ENCODE measurements at regions of chr1 and their contacts with region 1.

Region 1: DNA sequence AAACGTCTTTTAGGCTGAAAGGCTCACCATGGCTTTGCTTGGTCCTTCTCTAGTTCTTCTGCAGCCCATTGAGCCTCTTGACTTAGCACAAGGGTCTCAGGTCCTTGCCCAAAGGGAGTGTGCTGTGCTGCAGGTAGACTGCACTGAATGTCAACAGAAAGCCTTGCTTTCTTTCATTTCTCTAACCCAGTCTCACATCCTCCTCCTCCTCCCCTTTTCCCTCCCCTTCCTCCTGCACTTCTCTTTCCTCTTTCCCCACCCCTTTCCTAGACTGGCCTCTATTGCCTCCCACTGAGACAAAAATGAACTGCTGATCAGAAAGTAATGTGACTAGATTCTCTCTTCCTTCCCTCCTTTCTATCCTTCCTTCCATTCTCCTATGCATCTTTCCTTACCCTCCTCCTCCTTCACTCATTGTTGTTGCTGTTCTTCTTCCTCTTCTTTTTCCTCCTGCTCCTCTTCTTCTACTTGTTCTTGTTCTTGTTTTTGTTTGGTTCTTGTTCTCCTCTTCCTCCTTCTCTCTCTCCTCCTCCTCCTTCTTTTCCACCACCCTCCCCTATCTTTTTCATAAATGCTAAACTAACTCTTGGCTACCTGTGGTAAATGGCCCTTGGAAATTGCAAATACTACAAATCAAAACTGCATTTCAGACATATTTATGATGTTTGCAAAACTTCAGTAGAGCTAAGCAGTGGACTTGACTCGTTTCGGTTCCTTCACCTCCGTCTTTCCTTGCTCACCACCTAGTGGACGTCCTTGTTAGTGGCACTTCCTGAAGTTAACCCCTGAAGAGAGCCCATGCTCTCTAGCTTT is at the start of gene SELL:
- DNase-seq: peak; percentile 85
- ATAC-seq: peak; percentile 78
- H3K4me3 ChIP-seq: peak within 1 kb of the TSS; percentile 50 to 99 (median 82)
- H3K4me3 Mint-ChIP-seq: peak within 1 kb of the TSS; percentile 90
- H3K27ac ChIP-seq: peak within 1 kb of the TSS; percentile 45 to 87
- H3K27ac Mint-ChIP-seq: peak within 1 kb of the TSS; percentile 79
- H3K4me1 ChIP-seq: peaks cover 15 to 21% of the 10 kb centered on the region in 2 donors
- H3K4me1 Mint-ChIP-seq: peaks cover 32% of the 10 kb centered on the region
- H3K27me3 ChIP-seq: no peaks in the 10 kb centered on the region
- H3K27me3 Mint-ChIP-seq: peaks cover 3% of the 10 kb centered on the region
- CTCF ChIP-seq: peak; percentile 91
- total RNA-seq, gene SELL: 250 and 262 TPM in 2 replicates

Region 2: DNA sequence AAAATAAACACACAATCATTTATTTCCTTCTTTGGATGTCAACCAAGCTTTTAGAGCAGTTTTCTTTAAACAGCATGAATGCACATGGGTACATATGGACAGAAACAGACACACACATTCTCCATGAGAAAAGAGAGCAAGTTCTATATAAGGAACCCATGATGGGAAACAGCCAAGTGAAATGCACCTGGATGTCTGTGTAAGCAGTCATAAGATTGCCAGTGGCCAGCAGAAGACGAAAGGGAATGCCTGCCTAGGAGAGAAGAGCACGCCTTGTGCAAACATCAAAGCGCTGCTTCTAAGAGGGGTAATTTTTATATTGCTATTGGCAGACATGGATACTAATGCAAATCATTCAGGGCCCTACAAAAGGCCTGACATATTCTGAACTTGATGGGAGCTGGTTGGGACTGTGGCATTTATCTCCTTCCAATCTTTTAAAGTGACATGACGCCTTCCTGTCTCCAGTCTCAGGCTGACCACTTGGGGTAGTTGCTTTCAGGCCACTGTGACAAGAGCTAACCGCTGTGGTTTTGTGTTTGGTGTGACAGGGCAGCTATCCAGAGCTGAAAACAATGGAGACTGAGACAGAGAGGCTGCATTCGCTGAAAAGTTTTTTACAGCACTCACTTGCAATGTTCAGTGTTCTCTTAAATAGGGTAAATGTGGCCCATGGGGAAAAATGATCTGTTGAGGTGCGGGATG is 907.7 kb before region 1 on chr1:
- CTCF ChIA-PET with region 1: no interaction called
- POLR2A ChIA-PET with region 1: no interaction called
- intact Hi-C with region 1: no loop called
- DNase-seq: no peak
- ATAC-seq: no peak
- H3K4me3 ChIP-seq: no peak overlapping the region
- H3K4me3 Mint-ChIP-seq: no peak overlapping the region
- H3K27ac ChIP-seq: no peak overlapping the region
- H3K27ac Mint-ChIP-seq: no peak overlapping the region
- H3K4me1 ChIP-seq: no peaks in the 10 kb centered on the region
- H3K4me1 Mint-ChIP-seq: no peaks in the 10 kb centered on the region
- H3K27me3 ChIP-seq: peaks cover 0 to 3% (median 0%) of the 10 kb centered on the region in 4 experiments
- H3K27me3 Mint-ChIP-seq: peaks cover 13% of the 10 kb centered on the region
- CTCF ChIP-seq: no peak

Region 3: DNA sequence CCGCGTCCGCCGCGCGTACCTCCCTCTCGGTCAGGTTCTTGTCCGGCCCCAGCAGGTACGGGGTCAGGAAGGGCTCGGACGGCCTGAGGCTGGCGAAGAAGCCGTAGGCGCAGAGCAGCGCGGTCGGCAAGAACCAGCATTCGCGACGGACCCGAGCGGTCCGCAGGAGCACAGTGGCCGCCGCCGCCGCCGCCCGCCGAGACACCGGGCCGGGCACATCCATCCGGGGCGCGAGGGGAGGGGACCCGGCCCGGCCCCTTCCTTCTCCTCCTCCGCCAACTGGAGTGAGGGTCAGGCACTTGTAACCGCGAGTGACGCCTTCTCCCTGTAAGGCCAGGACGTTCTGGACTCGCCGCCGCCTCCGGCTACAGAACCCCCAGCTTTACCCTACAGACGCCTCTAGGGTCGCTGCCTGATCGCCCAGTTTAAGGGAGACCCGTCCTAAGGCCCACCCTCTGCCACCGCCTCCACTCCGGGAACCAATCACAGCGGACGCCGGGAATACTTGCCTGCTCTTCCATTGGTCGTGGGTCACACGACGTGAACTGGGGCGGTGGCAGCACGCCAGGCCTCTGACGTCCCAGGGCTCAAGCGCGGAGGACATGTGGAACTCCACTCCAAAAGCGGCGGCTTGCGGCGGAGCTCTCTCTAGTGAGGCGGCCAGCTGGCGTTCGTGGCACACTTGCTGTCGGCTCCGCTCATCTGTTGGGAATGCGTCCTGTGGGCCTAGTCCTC is 226.0 kb before region 1 on chr1 and contains the start of gene SLC19A2:
- CTCF ChIA-PET with region 1: interaction called, 4 read pairs
- POLR2A ChIA-PET with region 1: no interaction called
- intact Hi-C with region 1: loop called (anchors 2 kb)
- DNase-seq: peak; percentile 96
- ATAC-seq: peak; percentile 98
- H3K4me3 ChIP-seq: peak within 1 kb of the TSS; percentile 68 to 82 (median 74)
- H3K4me3 Mint-ChIP-seq: peak within 1 kb of the TSS; percentile 94
- H3K27ac ChIP-seq: peak within 1 kb of the TSS; percentile 62 to 82
- H3K27ac Mint-ChIP-seq: peak within 1 kb of the TSS; percentile 93
- H3K4me1 ChIP-seq: peaks cover 16 to 18% of the 10 kb centered on the region in 2 donors
- H3K4me1 Mint-ChIP-seq: peaks cover 28% of the 10 kb centered on the region
- H3K27me3 ChIP-seq: peaks cover 0 to 3% (median 0%) of the 10 kb centered on the region in 4 experiments
- H3K27me3 Mint-ChIP-seq: peaks cover 4% of the 10 kb centered on the region
- CTCF ChIP-seq: peak; percentile 44
- total RNA-seq, gene SLC19A2: 3.9 TPM in 2 replicates

Region 4: GRCh38 chr1:169595764-169596711 is 115.6 kb before region 1 on chr1:
- CTCF ChIA-PET with region 1: interaction called, 340 read pairs
- POLR2A ChIA-PET with region 1: interaction called, 6 read pairs
- intact Hi-C with region 1: loop called (anchors 1 kb)
- DNase-seq: no peak
- ATAC-seq: no peak
- H3K4me3 ChIP-seq: no peak overlapping the region
- H3K4me3 Mint-ChIP-seq: no peak overlapping the region
- H3K27ac ChIP-seq: no peak overlapping the region
- H3K27ac Mint-ChIP-seq: no peak overlapping the region
- H3K4me1 ChIP-seq: peaks cover under 1% of the 10 kb centered on the region in 2 donors
- H3K4me1 Mint-ChIP-seq: peaks cover 6% of the 10 kb centered on the region
- H3K27me3 ChIP-seq: no peaks in the 10 kb centered on the region
- H3K27me3 Mint-ChIP-seq: no peaks in the 10 kb centered on the region
- CTCF ChIP-seq: no peak

Region 5: DNA sequence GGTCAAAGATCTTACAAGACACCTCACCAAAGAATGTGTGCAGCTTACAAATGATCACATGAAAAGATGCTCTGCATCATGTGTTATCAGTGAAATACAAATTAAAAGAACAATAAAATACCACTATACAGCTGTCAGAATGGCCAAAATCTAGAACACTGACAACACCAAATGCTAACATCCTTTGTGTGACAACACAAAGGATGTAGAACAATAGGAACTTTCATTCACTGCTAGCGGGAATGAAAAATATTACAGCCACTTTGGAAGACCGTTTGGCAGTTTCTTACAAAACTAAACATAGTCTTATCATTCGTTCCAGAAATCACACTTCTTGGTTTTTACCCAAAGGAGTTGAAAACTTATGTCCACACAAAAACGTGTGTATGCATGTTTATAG is 61.1 kb before region 1 on chr1:
- CTCF ChIA-PET with region 1: interaction called, 11 read pairs
- POLR2A ChIA-PET with region 1: no interaction called
- intact Hi-C with region 1: no loop called
- DNase-seq: no peak
- ATAC-seq: no peak
- H3K4me3 ChIP-seq: no peak overlapping the region
- H3K4me3 Mint-ChIP-seq: no peak overlapping the region
- H3K27ac ChIP-seq: no peak overlapping the region
- H3K27ac Mint-ChIP-seq: no peak overlapping the region
- H3K4me1 ChIP-seq: peaks cover 4 to 7% of the 10 kb centered on the region in 2 donors
- H3K4me1 Mint-ChIP-seq: peaks cover 25% of the 10 kb centered on the region
- H3K27me3 ChIP-seq: no peaks in the 10 kb centered on the region
- H3K27me3 Mint-ChIP-seq: no peaks in the 10 kb centered on the region
- CTCF ChIP-seq: no peak

Region 6: GRCh38 chr1:169701261-169702005 is 10.2 kb before region 1 on chr1:
- CTCF ChIA-PET with region 1: interaction called, 109 read pairs
- POLR2A ChIA-PET with region 1: interaction called, 5 read pairs
- intact Hi-C with region 1: loop called (anchors 1 kb)
- DNase-seq: peak; percentile 45
- ATAC-seq: peak; percentile 44
- H3K4me3 ChIP-seq: peak overlapping the region; percentile 0 to 16 (median 1)
- H3K4me3 Mint-ChIP-seq: peak overlapping the region; percentile 76
- H3K27ac ChIP-seq: peak overlapping the region; percentile 56 to 87
- H3K27ac Mint-ChIP-seq: peak overlapping the region; percentile 94
- H3K4me1 ChIP-seq: peaks cover 98 to 100% of the 10 kb centered on the region in 2 donors
- H3K4me1 Mint-ChIP-seq: peaks cover 95% of the 10 kb centered on the region
- H3K27me3 ChIP-seq: no peaks in the 10 kb centered on the region
- H3K27me3 Mint-ChIP-seq: no peaks in the 10 kb centered on the region
- CTCF ChIP-seq: no peak

Region 7: GRCh38 chr1:169762699-169763098 is 51.0 kb after region 1 on chr1:
- CTCF ChIA-PET with region 1: no interaction called
- POLR2A ChIA-PET with region 1: no interaction called
- intact Hi-C with region 1: no loop called
- DNase-seq: no peak
- ATAC-seq: no peak
- H3K4me3 ChIP-seq: no peak overlapping the region
- H3K4me3 Mint-ChIP-seq: no peak overlapping the region
- H3K27ac ChIP-seq: no peak overlapping the region
- H3K27ac Mint-ChIP-seq: no peak overlapping the region
- H3K4me1 ChIP-seq: no peaks in the 10 kb centered on the region
- H3K4me1 Mint-ChIP-seq: no peaks in the 10 kb centered on the region
- H3K27me3 ChIP-seq: peaks cover 0 to 7% (median 0%) of the 10 kb centered on the region in 4 experiments
- H3K27me3 Mint-ChIP-seq: peaks cover 20% of the 10 kb centered on the region
- CTCF ChIP-seq: no peak

Region 8: GRCh38 chr1:169893494-169894362 is 182.1 kb after region 1 on chr1 and contains the start of gene SCYL3:
- CTCF ChIA-PET with region 1: no interaction called
- POLR2A ChIA-PET with region 1: no interaction called
- intact Hi-C with region 1: loop called (anchors 5 kb)
- DNase-seq: peak; percentile 99
- ATAC-seq: peak; percentile 88
- H3K4me3 ChIP-seq: peak within 1 kb of the TSS; percentile 81 to 96 (median 85)
- H3K4me3 Mint-ChIP-seq: peak within 1 kb of the TSS; percentile 98
- H3K27ac ChIP-seq: peak within 1 kb of the TSS; percentile 97
- H3K27ac Mint-ChIP-seq: peak within 1 kb of the TSS; percentile 100
- H3K4me1 ChIP-seq: peaks cover 25 to 32% of the 10 kb centered on the region in 2 donors
- H3K4me1 Mint-ChIP-seq: peaks cover 44% of the 10 kb centered on the region
- H3K27me3 ChIP-seq: peaks cover 0 to 3% (median under 1%) of the 10 kb centered on the region in 4 experiments
- H3K27me3 Mint-ChIP-seq: peaks cover 15% of the 10 kb centered on the region
- CTCF ChIP-seq: no peak
- total RNA-seq, gene SCYL3: 17.6 and 18.4 TPM in 2 replicates

Measured in B cell (primary cell).